ENCODE measurements at regions of chr17 and their contacts with region 1.

Region 1: GRCh38 chr17:14352136-14352535 is 51.3 kb downstream of the HS3ST3B1 start:
- DNase-seq: no peak
- H3K4me3 ChIP-seq: no peak overlapping the region
- H3K27ac ChIP-seq: no peak overlapping the region
- H3K4me1 ChIP-seq: no peaks in the 10 kb centered on the region
- H3K27me3 ChIP-seq: peaks cover 27% of the 10 kb centered on the region
- CTCF ChIP-seq: no peak

Region 2: DNA sequence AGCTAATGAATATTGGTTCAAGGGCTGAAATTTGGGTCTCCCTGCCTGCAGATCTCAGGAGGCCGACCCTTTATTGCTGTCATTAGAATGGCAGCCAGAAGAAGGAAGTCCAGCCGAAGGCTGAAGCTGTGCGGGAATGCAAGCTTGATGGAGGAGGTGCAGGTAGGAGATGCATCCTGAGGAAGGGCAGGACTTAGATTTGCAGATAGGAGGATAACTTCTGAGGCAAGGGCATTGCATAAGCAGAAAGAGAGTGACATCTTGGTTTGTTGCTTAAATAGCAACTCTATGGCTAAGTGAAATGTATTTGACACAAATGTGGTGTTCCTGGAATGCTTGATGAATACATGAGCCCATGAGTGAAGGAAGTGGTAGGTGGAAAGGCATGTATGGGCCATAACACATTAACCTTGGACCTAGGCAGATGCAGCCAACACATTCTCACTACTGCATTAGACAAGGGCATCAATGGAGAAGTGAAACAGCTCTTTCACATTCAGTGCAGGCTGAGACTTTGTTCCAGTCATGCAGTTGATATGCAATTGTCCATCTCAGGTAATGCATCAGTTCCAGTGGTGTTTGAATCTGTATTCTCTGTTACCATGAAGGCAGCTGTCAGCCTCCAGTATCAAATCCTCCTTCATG is 82.2 kb after region 1 on chr17:
- CTCF ChIA-PET with region 1: no interaction called
- POLR2A ChIA-PET with region 1: no interaction called
- intact Hi-C with region 1: no loop called
- DNase-seq: no peak
- H3K4me3 ChIP-seq: no peak overlapping the region
- H3K27ac ChIP-seq: no peak overlapping the region
- H3K4me1 ChIP-seq: no peaks in the 10 kb centered on the region
- H3K27me3 ChIP-seq: no peaks in the 10 kb centered on the region; the same call in 1 of the 2 replicates
- CTCF ChIP-seq: no peak

Region 3: GRCh38 chr17:14693382-14693781 is 341.2 kb after region 1 on chr17:
- CTCF ChIA-PET with region 1: no interaction called
- POLR2A ChIA-PET with region 1: interaction called, 11 read pairs
- intact Hi-C with region 1: no loop called
- DNase-seq: no peak
- H3K4me3 ChIP-seq: no peak overlapping the region
- H3K27ac ChIP-seq: no peak overlapping the region
- H3K4me1 ChIP-seq: no peaks in the 10 kb centered on the region
- H3K27me3 ChIP-seq: no peaks in the 10 kb centered on the region
- CTCF ChIP-seq: no peak